ENCODE measurements at regions of chr22 and their contacts with region 1.

Region 1: GRCh38 chr22:40542821-40543540 is 93.5 kb downstream of the MRTFA start:
- DNase-seq: no peak
- ATAC-seq: no peak
- H3K4me3 ChIP-seq: no peak overlapping the region
- H3K27ac ChIP-seq: no peak overlapping the region
- H3K4me1 ChIP-seq: 0 out of 2 replicates have a peak, but pooled peaks cover 2% of the 10 kb centered on the region
- H3K27me3 ChIP-seq: no peaks in the 10 kb centered on the region
- CTCF ChIP-seq: no peak
- POLR2A ChIP-seq: no peak
- RAD21 ChIP-seq: no peak

Region 2: GRCh38 chr22:40556641-40557040 is 13.7 kb after region 1 on chr22:
- CTCF ChIA-PET with region 1: no interaction called
- POLR2A ChIA-PET with region 1: no interaction called
- dilution Hi-C with region 1: no loop called
- in situ Hi-C with region 1: no loop called
- intact Hi-C with region 1: loop called (anchors 2 kb)
- DNase-seq: no peak
- ATAC-seq: no peak
- H3K4me3 ChIP-seq: no peak overlapping the region
- H3K27ac ChIP-seq: no peak overlapping the region
- H3K4me1 ChIP-seq: peaks cover 2% of the 10 kb centered on the region; the same call in 1 of the 2 replicates
- H3K27me3 ChIP-seq: no peaks in the 10 kb centered on the region
- CTCF ChIP-seq: no peak
- POLR2A ChIP-seq: no peak
- RAD21 ChIP-seq: no peak